Activated naive CD4-positive, alpha-beta T cell treated with anti-CD3 and anti-CD28 coated beads for 36 hours (primary cell): ENCODE measurements at regions of chr2 and their contacts with region 1.

Region 1: GRCh38 chr2:64698668-64699444 is 45.1 kb upstream of the SERTAD2 start:
- DNase-seq: no peak
- H3K4me3 Mint-ChIP-seq: peak overlapping the region; percentile 8
- H3K27ac Mint-ChIP-seq: peak overlapping the region; percentile 68
- H3K4me1 Mint-ChIP-seq: peaks cover 47% of the 10 kb centered on the region
- H3K27me3 Mint-ChIP-seq: no peaks in the 10 kb centered on the region

Region 2: GRCh38 chr2:64609227-64609941 is 89.5 kb before region 1 on chr2:
- CTCF ChIA-PET with region 1: no interaction called
- intact Hi-C with region 1: loop called (anchors 1 kb)
- DNase-seq: peak; percentile 62
- H3K4me3 Mint-ChIP-seq: peak overlapping the region; percentile 65
- H3K27ac Mint-ChIP-seq: no peak overlapping the region
- H3K4me1 Mint-ChIP-seq: peaks cover 24% of the 10 kb centered on the region
- H3K27me3 Mint-ChIP-seq: no peaks in the 10 kb centered on the region

Region 3: DNA sequence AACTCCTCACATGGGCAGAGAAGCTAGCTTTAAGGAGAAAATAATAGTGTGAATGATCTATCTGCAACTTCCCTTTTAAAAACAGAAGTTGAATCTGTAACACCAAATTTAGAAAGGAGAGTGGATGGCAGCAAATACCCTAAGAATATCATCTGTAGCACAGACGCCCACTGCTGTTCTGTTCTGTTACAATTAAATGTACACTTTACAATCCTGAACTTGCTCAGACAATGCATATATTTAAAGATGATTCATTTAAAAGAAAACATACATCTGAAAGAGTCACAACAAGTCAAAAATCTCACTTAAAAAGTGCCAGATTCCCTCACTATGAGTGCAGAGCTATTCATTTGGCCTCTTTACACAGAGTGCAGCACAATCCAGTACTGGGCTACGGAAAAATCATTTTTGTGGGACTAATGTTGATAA is 37.1 kb before region 1 on chr2:
- CTCF ChIA-PET with region 1: interaction called, 5 read pairs
- intact Hi-C with region 1: loop called (anchors 1 kb)
- DNase-seq: no peak
- H3K4me3 Mint-ChIP-seq: no peak overlapping the region
- H3K27ac Mint-ChIP-seq: peak overlapping the region; percentile 56
- H3K4me1 Mint-ChIP-seq: peaks cover 68% of the 10 kb centered on the region
- H3K27me3 Mint-ChIP-seq: no peaks in the 10 kb centered on the region

Region 4: GRCh38 chr2:64685438-64685837 is 13.4 kb before region 1 on chr2:
- CTCF ChIA-PET with region 1: interaction called, 3 read pairs
- intact Hi-C with region 1: loop called (anchors 1 kb)
- DNase-seq: no peak
- H3K4me3 Mint-ChIP-seq: no peak overlapping the region
- H3K27ac Mint-ChIP-seq: no peak overlapping the region
- H3K4me1 Mint-ChIP-seq: peaks cover 18% of the 10 kb centered on the region
- H3K27me3 Mint-ChIP-seq: no peaks in the 10 kb centered on the region

Region 5: GRCh38 chr2:64737547-64737946 is 38.7 kb after region 1 on chr2:
- CTCF ChIA-PET with region 1: no interaction called
- intact Hi-C with region 1: loop called (anchors 1 kb)
- DNase-seq: no peak
- H3K4me3 Mint-ChIP-seq: no peak overlapping the region
- H3K27ac Mint-ChIP-seq: peak overlapping the region; percentile 30
- H3K4me1 Mint-ChIP-seq: peaks cover 29% of the 10 kb centered on the region
- H3K27me3 Mint-ChIP-seq: no peaks in the 10 kb centered on the region

Region 6: DNA sequence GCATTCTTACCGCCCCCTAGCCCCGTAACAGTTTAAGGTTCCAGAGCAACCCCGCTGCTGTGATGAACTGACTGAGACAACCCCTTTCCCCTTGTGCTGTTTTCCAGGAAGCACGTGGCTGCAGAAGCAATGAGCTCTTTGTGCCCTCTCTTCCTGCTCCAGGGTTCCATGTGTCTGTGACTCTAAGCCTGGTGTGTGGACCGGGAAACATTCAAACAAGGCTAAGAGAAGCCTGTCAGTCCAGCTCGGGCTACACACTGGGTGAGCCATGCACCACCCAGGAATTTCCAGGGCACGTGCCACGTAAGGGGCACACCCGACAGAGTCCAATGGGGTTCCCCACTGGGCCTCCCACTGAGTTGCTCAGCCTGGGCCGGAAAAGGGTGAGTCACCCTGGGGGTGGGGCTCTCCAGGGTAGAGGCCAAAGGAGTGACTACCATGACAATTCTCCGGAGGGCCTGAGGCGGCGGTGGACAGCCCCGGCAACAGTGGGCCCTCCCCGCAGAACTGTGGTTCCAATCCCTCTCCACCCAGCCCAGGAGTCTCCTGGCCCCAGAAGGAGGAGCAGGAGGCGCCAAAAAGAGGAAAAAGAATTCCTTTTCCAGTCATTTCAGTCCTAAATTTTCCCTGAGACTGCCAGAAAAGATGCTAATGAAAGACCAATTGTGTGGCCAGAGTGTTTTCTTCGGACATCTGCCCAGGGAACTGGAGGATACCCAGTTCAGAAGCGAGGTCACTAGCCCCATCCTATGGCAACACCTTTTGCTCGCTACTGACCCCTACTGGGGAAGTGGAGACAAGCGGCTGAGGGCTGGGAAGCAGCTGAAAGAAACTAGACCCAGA is 132.5 kb after region 1 on chr2:
- CTCF ChIA-PET with region 1: no interaction called
- intact Hi-C with region 1: loop called (anchors 2 kb)
- DNase-seq: peak; percentile 94
- H3K4me3 Mint-ChIP-seq: peak overlapping the region; percentile 52
- H3K27ac Mint-ChIP-seq: peak overlapping the region; percentile 81
- H3K4me1 Mint-ChIP-seq: peaks cover 16% of the 10 kb centered on the region
- H3K27me3 Mint-ChIP-seq: peaks cover 5% of the 10 kb centered on the region

Region 7: DNA sequence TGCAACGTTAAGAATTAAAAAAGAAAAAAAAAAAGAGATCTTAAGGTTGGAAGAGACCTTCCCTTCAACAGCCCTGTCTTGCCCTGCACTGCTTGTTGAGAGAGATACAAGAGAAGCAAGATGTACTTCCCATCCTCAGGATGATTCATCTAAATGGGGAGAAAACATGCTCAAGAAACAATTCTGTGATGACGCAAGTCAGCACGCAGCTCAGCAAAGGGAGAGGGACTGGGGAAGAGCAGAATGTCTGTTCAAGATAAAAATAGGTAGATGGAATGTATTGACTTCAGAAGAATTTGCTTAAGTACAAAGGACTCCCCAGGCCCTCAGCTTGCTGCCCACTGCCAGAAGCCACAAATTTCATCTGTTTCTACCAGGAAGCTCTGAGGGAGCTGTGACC is 931.8 kb after region 1 on chr2:
- CTCF ChIA-PET with region 1: no interaction called
- intact Hi-C with region 1: no loop called
- DNase-seq: no peak
- H3K4me3 Mint-ChIP-seq: no peak overlapping the region
- H3K27ac Mint-ChIP-seq: no peak overlapping the region
- H3K4me1 Mint-ChIP-seq: no peaks in the 10 kb centered on the region
- H3K27me3 Mint-ChIP-seq: peaks cover 3% of the 10 kb centered on the region